Mammary epithelial cell (primary cell): ENCODE measurements at regions of chr20 and their contacts with region 1.

Region 1: GRCh38 chr20:235891-236290 is 8.8 kb downstream of the DEFB129 start:
- DNase-seq: peak; percentile 69
- H3K4me3 ChIP-seq: no peak overlapping the region
- H3K27ac ChIP-seq: peak overlapping the region; percentile 0
- H3K4me1 ChIP-seq: peaks cover 14% of the 10 kb centered on the region
- H3K27me3 ChIP-seq: no peaks in the 10 kb centered on the region
- CTCF ChIP-seq: peak; percentile 40 to 77

Region 2: DNA sequence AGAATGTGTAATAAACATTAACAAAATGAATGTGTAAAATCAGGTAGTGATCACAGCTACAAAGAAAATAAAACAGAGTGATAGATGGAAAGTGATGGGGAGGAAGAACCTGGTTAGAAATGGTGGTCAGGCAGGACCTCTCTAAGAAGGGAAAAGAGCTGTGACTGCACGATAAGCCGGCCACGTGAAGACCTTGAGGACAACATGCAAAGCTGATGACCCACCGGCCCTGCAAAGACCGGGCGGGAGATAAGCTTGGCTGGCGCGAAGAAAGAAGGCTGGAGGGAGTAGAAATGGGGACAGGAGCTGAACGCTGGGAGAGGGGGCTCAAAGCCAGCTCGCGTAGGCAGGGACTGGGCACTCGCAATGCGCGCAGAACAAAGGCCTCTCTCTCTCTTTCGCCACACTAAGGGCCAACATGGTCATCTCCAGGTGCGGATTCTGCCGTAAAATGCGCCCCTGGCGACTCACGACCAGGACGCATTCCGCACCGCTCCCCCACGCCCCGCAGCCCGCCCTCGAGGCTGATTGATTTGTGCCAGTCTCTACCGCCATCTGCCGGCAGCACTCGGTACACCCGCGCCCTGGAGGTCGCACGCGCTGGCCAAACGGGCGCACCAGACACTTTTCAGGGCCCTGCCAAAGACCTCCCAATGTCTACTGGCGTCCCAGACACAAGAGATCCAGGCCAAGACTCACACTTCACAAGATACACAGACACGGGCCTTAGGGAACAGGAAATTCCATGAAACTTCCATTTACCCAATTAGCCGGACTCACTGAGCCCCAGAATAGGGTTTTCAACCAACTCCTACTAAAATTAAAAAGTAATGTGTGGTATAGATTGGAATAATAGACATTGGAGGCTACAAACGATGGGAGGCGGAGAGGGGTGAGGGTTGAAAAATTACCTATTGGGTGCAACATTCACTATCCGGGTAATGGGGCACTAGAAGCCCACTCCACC is 31.0 kb after region 1 on chr20:
- CTCF ChIA-PET with region 1: no interaction called
- dilution Hi-C with region 1: no loop called
- in situ Hi-C with region 1: no loop called
- intact Hi-C with region 1: loop called (anchors 1 kb)
- DNase-seq: peak; percentile 58
- H3K4me3 ChIP-seq: peak overlapping the region; percentile 2 to 41 (median 14)
- H3K27ac ChIP-seq: no peak overlapping the region
- H3K4me1 ChIP-seq: no peaks in the 10 kb centered on the region
- H3K27me3 ChIP-seq: peaks cover 3% of the 10 kb centered on the region
- CTCF ChIP-seq: peak; percentile 67 to 91

Region 3: DNA sequence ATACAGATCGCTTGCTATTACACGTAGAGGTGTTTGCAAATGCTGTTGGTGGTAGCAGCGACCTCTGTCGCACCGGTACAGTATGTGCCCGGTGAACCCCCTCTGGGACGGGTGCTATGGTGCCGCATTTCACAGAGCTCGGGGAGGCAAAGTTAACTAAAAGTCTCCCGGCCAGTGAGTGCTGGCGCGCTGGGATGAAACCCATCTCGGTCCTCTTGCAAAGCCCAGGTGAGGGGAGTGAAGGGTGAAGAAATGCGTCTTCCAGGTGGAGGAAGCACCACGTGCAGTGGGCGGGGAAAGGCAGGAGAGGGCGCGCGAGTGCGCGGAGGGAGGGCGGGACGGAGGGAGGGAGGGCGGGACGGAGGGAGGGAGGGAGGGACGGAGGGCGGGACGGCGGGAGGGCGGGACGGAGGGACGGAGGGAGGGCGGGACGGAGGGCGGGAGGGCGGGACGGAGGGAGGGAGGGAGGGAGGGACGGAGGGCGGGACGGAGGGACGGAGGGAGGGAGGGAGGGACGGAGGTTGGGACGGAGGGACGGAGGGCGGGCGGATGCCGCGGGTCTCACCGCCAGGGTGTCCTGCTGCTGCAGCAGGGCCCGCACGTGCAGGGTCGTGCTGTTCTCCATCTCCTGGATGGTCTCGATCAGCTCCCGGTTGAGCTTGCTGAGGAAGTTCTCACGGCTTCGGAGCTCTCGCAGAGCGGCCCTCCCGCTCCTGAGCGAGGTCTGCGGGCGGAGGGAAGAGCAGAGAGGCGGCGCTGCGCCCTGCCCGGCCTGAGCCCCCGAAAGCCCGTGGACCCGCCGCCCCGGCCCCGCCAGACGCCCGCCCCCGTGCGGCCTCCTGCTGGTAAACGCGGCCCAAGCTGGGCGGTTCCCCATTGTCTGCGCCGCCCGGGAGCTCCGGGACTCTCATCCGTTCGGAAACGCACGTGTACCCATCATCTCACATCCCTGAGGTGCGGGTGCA is 43.0 kb after region 1 on chr20:
- CTCF ChIA-PET with region 1: no interaction called
- dilution Hi-C with region 1: no loop called
- in situ Hi-C with region 1: no loop called
- intact Hi-C with region 1: no loop called
- DNase-seq: no peak
- H3K4me3 ChIP-seq: peak overlapping the region in 1 of 3 experiments; percentile 12
- H3K27ac ChIP-seq: no peak overlapping the region
- H3K4me1 ChIP-seq: no peaks in the 10 kb centered on the region
- H3K27me3 ChIP-seq: peaks cover 2% of the 10 kb centered on the region
- CTCF ChIP-seq: peak in 1 of 2 donors; percentile 12

Region 4: DNA sequence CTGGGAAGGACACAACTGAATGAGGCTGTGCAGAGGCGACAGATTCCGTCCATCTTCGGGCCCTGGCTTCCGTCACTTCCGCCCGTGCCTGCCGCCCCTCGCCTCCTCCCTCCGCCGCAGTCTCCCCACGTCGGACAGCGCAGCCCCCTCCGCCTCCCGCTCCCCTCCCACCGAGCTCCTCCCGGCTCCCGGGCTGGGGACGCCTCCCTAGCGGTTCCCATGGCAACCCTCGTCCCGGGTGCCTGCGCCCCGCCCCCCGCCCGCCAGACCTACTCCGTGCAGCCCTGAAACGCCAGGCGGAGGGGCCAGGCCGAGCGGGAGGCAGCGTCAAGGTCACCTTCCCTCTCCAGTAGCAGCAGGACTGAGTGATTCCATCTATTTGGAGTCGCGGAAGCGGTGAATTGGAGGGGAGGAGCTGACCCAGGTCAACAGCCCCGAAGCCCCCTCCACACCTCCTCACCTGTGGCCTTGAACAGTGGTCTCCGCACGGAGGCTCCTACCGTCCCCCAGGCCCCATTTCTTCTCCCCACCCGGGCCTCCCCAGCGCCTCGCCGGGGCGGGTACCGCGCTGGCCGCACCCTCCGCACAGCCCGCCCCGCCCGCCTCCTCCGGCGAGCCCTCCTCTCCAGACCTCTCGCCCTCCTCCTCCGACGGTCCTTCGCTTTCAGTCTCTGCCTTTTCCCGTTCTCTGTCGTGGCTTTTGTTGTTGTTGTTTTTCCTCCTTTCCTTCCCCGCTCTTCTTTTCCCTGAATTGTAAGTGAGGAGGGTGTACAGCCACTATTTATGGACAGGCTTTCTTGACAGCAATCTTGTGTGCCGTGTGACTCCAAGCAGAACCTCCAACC is 112.0 kb after region 1 on chr20:
- CTCF ChIA-PET with region 1: no interaction called
- dilution Hi-C with region 1: no loop called
- in situ Hi-C with region 1: no loop called
- intact Hi-C with region 1: loop called (anchors 5 kb)
- DNase-seq: peak; percentile 69
- H3K4me3 ChIP-seq: peak overlapping the region; percentile 55 to 83 (median 82)
- H3K27ac ChIP-seq: peak overlapping the region; percentile 49
- H3K4me1 ChIP-seq: peaks cover 12% of the 10 kb centered on the region
- H3K27me3 ChIP-seq: no peaks in the 10 kb centered on the region
- CTCF ChIP-seq: no peak

Region 5: DNA sequence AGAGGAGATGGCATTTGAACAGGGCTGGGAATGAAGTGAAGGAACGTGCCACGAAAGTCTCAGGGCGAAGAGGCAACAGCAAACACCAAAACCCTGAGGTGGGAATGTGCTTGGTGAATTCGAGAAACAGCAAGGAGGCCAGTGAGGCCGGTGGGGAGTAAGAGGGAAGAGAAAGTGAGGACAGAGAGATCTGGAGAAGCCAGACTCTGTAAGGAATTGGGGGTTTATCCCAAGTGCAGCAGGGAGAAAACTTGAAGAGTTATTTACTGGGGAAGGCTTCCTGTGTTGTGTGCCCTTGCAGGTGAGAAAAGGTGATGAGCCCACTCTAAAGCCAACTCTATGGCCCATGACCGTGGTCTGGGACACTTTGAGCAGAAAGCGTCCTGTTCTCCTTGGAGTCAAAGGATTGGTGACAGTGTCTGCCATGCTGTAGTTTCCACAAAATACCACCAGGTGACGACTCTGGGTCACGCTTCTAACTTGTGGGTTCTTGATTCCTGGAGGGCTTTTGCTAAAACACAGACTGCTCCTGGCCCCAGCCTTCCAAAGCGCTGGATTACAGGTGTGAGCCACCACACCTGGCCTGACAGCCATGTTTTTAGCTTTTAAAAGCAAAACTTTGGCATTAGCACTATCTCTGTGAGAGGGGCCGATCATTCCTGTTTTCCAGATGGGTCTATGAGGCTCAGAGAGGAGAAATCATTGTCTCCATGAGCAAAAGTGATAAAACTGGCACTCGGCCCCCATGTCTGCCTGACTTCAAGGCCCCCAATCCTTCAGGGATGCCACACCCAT is 325.7 kb after region 1 on chr20:
- CTCF ChIA-PET with region 1: no interaction called
- dilution Hi-C with region 1: no loop called
- in situ Hi-C with region 1: no loop called
- intact Hi-C with region 1: loop called (anchors 5 kb)
- DNase-seq: peak; percentile 50
- H3K4me3 ChIP-seq: no peak overlapping the region
- H3K27ac ChIP-seq: no peak overlapping the region
- H3K4me1 ChIP-seq: no peaks in the 10 kb centered on the region
- H3K27me3 ChIP-seq: no peaks in the 10 kb centered on the region
- CTCF ChIP-seq: peak; percentile 97 to 100